ENCODE measurements at regions of chr11 and their contacts with region 1.

Region 1: DNA sequence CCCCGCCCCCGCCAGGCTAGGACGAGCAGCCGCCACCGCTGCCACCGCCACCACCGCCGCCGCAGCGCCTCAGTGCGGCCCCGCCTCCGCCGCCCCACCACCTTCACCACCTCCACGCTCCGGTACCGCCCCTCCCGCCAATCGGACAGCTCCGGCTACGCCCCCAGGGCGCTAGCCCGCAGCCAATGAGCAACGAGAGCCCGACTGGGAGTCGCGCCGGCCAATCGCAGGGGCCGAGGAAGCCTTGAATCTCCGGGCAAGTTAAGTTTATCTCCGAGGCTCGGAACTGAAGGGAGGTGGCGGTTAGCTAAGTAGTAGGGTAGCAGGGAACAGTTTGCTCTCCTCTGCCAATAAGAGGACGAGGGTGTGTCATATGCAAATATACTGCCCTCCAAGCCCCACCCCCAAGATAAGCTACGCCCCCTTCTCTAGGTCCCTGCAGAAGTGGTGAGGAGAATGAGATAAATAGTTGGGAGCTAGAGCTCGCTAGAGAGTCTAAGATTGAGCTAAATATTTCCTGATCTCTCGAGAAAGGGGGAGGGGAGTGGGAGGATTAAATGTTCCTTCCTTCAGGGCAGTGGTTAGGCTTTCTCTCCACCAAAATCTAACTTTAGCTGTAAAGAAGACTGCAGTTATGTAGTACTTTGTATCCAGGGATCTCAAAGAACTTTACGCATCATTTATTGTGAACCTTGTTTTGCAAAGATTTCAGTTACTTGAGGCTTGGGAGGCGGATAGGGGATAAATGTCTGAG is at the start of gene SESN3:
- DNase-seq: peak; percentile 100
- H3K4me3 ChIP-seq: peak within 1 kb of the TSS; percentile 67 to 91 (median 84)
- H3K27ac ChIP-seq: peak within 1 kb of the TSS; percentile 86 to 96 (median 93)
- H3K4me1 ChIP-seq: peaks cover 8 to 66% (median 42%) of the 10 kb centered on the region in 6 donors
- H3K27me3 ChIP-seq: no peaks in the 10 kb centered on the region
- CTCF ChIP-seq: peak in 2 of 11 experiments; percentile 29 to 49
- POLR2A ChIP-seq: peak; percentile 32 to 94 (median 65)
- total RNA-seq, gene SESN3: 51.0 to 79.9 (median 67.2) TPM

Region 2: GRCh38 chr11:95089620-95090542 is 141.4 kb before region 1 on chr11 and contains the start of gene ENDOD1:
- intact Hi-C with region 1: loop called (anchors 10 kb)
- DNase-seq: peak; percentile 98
- H3K4me3 ChIP-seq: peak within 1 kb of the TSS; percentile 69 to 92 (median 83)
- H3K27ac ChIP-seq: peak within 1 kb of the TSS; percentile 91 to 97 (median 94)
- H3K4me1 ChIP-seq: peaks cover 17 to 60% (median 55%) of the 10 kb centered on the region in 6 donors
- H3K27me3 ChIP-seq: no peaks in the 10 kb centered on the region
- CTCF ChIP-seq: peak in 2 of 11 experiments; percentile 4 to 17
- POLR2A ChIP-seq: peak in 2 of 3 donors; percentile 86 to 90
- total RNA-seq, gene ENDOD1: 34.3 to 80.5 (median 70.5) TPM

Region 3: GRCh38 chr11:95163106-95163505 is 68.2 kb before region 1 on chr11:
- intact Hi-C with region 1: loop called (anchors 10 kb)
- DNase-seq: no peak
- H3K4me3 ChIP-seq: no peak overlapping the region
- H3K27ac ChIP-seq: no peak overlapping the region
- H3K4me1 ChIP-seq: peaks cover 0 to 12% (median 0%) of the 10 kb centered on the region in 6 donors
- H3K27me3 ChIP-seq: no peaks in the 10 kb centered on the region
- CTCF ChIP-seq: no peak
- POLR2A ChIP-seq: no peak